SK-N-SH (cell line): ENCODE measurements at regions of chr7 and their contacts with region 1.

Region 1: GRCh38 chr7:124765401-124766352 is at the start of gene GPR37:
- DNase-seq: peak; percentile 95
- H3K4me3 ChIP-seq: peak within 1 kb of the TSS; percentile 69 to 75
- H3K27ac ChIP-seq: no peak within 1 kb of the TSS; a peak in 1 of 4 replicates
- H3K4me1 ChIP-seq: peaks cover 0 to 14% of the 10 kb centered on the region in 2 experiments; a peak in 1 of 4 replicates
- H3K27me3 ChIP-seq: peaks cover 24% of the 10 kb centered on the region
- CTCF ChIP-seq: no peak
- EP300 ChIP-seq: no peak
- RAD21 ChIP-seq: peak; percentile 51
- polyA plus RNA-seq, gene GPR37: 0.03 TPM in 1 of 2 replicates, not detected in the other

Region 2: DNA sequence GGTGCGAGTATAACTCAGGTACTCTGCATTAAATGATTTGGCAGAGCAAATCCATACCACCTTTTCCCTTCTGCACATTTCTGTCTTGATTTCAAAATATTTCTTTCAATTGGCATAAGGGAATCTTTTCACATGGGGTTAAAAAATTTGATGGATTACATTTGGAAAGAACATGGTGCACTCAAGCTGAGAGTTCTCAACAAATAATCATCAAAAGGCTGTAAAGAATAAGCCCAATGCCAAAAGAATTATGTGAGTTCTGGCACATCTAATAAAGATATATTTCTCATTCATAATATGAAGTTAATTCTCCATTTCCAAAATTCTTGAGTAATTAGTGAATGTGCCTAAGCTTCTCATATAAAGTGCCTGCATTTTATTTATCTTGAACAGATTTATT is 223.2 kb before region 1 on chr7:
- CTCF ChIA-PET with region 1: no interaction called
- POLR2A ChIA-PET with region 1: no interaction called
- DNase-seq: no peak
- H3K4me3 ChIP-seq: no peak overlapping the region
- H3K27ac ChIP-seq: no peak overlapping the region
- H3K4me1 ChIP-seq: no peaks in the 10 kb centered on the region
- H3K27me3 ChIP-seq: no peaks in the 10 kb centered on the region
- CTCF ChIP-seq: no peak
- EP300 ChIP-seq: no peak
- RAD21 ChIP-seq: no peak

Region 3: DNA sequence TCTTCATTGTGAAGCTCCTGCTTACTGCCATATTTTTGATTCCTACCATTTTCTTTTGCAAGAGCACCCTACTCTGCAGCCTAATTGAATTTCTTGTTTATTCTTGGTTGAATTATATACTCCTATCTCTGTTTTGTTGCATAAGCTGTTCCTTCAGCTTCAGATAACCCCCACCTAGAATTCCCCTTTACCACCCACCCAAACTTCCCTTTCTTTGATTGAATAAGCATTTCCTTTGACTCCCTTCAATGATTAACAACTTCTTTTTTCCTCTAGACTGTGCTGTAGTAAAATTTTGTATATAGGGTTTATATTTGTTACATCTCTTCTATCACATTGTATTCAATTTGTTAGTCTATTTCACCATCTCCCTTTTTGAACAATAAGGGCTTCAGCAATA is 168.2 kb before region 1 on chr7:
- CTCF ChIA-PET with region 1: no interaction called
- POLR2A ChIA-PET with region 1: no interaction called
- DNase-seq: no peak
- H3K4me3 ChIP-seq: no peak overlapping the region
- H3K27ac ChIP-seq: no peak overlapping the region
- H3K4me1 ChIP-seq: no peaks in the 10 kb centered on the region
- H3K27me3 ChIP-seq: no peaks in the 10 kb centered on the region
- CTCF ChIP-seq: no peak
- EP300 ChIP-seq: no peak
- RAD21 ChIP-seq: no peak

Region 4: GRCh38 chr7:124752310-124752709 is 13.4 kb before region 1 on chr7:
- CTCF ChIA-PET with region 1: interaction called, 10 read pairs
- POLR2A ChIA-PET with region 1: interaction called, 3 read pairs
- DNase-seq: no peak
- H3K4me3 ChIP-seq: no peak overlapping the region
- H3K27ac ChIP-seq: no peak overlapping the region
- H3K4me1 ChIP-seq: no peaks in the 10 kb centered on the region; a peak in 1 of 4 replicates
- H3K27me3 ChIP-seq: no peaks in the 10 kb centered on the region
- CTCF ChIP-seq: no peak
- EP300 ChIP-seq: no peak
- RAD21 ChIP-seq: no peak

Region 5: GRCh38 chr7:124777268-124777667 is 11.6 kb after region 1 on chr7:
- CTCF ChIA-PET with region 1: interaction called, 11 read pairs
- POLR2A ChIA-PET with region 1: no interaction called
- DNase-seq: no peak
- H3K4me3 ChIP-seq: no peak overlapping the region
- H3K27ac ChIP-seq: no peak overlapping the region
- H3K4me1 ChIP-seq: no peaks in the 10 kb centered on the region
- H3K27me3 ChIP-seq: no peaks in the 10 kb centered on the region
- CTCF ChIP-seq: no peak
- EP300 ChIP-seq: no peak
- RAD21 ChIP-seq: no peak

Region 6: GRCh38 chr7:124801330-124801895 is 35.7 kb after region 1 on chr7:
- CTCF ChIA-PET with region 1: no interaction called
- POLR2A ChIA-PET with region 1: no interaction called
- DNase-seq: no peak
- H3K4me3 ChIP-seq: no peak overlapping the region
- H3K27ac ChIP-seq: no peak overlapping the region
- H3K4me1 ChIP-seq: peaks cover 0 to 6% of the 10 kb centered on the region in 2 experiments; a peak in 2 of 4 replicates
- H3K27me3 ChIP-seq: no peaks in the 10 kb centered on the region
- CTCF ChIP-seq: no peak
- EP300 ChIP-seq: peak in 1 of 2 experiments; percentile 68; a peak in 2 of 4 replicates
- RAD21 ChIP-seq: no peak

Region 7: DNA sequence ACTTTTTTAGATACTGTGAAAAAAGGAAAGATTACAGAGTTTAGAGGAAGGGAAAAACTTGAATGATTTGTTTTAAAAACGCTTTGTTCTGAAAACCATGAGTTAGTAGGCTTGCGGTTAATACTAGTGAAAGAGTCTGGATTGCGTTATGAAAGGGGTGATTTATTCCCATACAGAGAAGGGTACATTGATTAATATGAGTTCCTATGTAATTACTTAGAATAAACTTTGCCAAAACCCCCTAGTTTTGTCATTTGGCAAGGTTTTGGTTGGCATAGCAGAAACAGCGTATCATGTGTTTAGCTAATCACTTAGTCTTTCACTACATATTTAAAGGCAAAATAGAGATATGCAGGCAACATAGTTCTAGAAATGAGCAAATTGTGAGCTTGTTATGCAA is 255.1 kb after region 1 on chr7:
- CTCF ChIA-PET with region 1: no interaction called
- POLR2A ChIA-PET with region 1: no interaction called
- DNase-seq: no peak
- H3K4me3 ChIP-seq: no peak overlapping the region
- H3K27ac ChIP-seq: no peak overlapping the region
- H3K4me1 ChIP-seq: no peaks in the 10 kb centered on the region; a peak in 1 of 4 replicates
- H3K27me3 ChIP-seq: no peaks in the 10 kb centered on the region
- CTCF ChIP-seq: no peak
- EP300 ChIP-seq: no peak
- RAD21 ChIP-seq: no peak